ENCODE measurements at regions of chr12 and their contacts with region 1.

Region 1: GRCh38 chr12:48542300-48542928 is 17.0 kb downstream of the OR8S1 start:
- DNase-seq: peak; percentile 63
- ATAC-seq: peak; percentile 86
- H3K4me3 ChIP-seq: no peak overlapping the region
- H3K27ac ChIP-seq: no peak overlapping the region
- H3K4me1 ChIP-seq: peaks cover 6% of the 10 kb centered on the region
- H3K27me3 ChIP-seq: peaks cover 22% of the 10 kb centered on the region
- CTCF ChIP-seq: peak; percentile 90

Region 2: DNA sequence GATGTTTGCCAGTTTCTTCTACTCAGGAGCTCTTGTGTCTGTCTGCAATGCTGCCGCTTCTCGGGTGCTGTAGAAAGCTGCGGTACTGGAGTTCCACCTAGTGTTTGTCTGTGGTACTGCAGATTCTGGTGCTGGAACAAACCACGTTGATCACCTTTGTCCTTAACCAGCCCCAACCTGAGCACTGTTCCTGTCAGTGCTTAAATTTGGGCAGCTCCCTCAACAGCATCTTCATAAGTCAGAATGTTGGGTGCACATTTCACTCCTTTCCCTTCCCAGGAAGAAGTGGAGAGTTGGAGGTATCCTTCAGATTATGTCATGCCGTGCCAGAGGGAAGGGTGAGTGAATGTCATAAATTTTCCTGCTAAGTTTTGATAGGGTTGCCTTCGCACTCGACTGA is 76.1 kb after region 1 on chr12:
- CTCF ChIA-PET with region 1: interaction called, 60 read pairs
- POLR2A ChIA-PET with region 1: interaction called, 4 read pairs
- intact Hi-C with region 1: loop called (anchors 1 kb)
- DNase-seq: peak; percentile 89
- ATAC-seq: peak; percentile 98
- H3K4me3 ChIP-seq: no peak overlapping the region
- H3K27ac ChIP-seq: no peak overlapping the region
- H3K4me1 ChIP-seq: no peaks in the 10 kb centered on the region
- H3K27me3 ChIP-seq: no peaks in the 10 kb centered on the region
- CTCF ChIP-seq: peak; percentile 97

Region 3: DNA sequence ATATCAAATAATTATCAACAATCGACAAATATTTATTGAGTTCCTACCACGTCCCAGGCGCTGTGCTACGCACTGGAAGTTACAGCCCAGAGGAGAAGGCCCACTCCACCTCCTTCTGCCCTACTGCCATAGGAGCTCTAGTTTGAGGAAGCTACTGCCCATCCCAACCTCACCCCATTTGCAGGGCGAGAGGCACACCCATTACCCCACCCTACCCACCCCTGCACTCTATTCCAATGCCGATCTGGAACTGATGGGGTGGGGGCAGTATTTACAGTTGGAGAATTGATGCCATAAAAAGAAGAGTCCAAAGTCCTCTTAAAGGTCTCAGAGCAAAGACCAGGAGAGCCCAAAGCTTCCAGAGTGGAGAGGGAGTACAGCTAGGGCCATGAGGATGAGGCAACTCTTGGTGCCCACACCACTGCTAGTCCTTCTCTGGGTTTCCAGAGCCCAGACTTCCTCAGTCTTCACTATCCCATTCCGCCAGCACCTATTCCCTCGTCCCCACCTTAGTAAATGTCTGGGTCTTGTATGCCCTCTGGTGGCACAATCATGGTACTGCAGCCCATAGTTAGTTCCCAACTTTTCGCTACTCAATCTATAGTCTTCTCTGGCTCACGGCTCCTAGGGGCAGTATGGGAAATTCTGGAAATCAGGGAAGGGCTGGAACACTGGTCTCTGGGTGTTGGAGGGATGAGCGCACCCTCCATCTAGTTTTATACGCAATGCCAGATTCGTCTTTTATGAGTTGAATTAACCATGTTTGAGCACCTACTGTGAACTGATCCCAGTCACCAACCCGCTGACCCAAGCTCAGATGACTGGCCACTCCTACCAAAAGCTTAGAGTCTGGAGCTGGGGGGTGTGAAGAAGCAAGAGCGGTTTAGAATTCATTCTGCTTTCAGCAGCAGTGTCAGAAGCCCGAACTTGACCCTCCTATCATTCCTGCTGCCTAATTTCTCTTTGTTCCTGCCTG is 253.4 kb after region 1 on chr12:
- CTCF ChIA-PET with region 1: no interaction called
- POLR2A ChIA-PET with region 1: no interaction called
- intact Hi-C with region 1: loop called (anchors 5 kb)
- DNase-seq: peak; percentile 93
- ATAC-seq: peak; percentile 92
- H3K4me3 ChIP-seq: no peak overlapping the region
- H3K27ac ChIP-seq: no peak overlapping the region
- H3K4me1 ChIP-seq: peaks cover 10% of the 10 kb centered on the region
- H3K27me3 ChIP-seq: no peaks in the 10 kb centered on the region
- CTCF ChIP-seq: peak; percentile 98

Region 4: GRCh38 chr12:49440035-49440434 is 897.6 kb after region 1 on chr12:
- CTCF ChIA-PET with region 1: no interaction called
- POLR2A ChIA-PET with region 1: no interaction called
- intact Hi-C with region 1: no loop called
- DNase-seq: no peak
- ATAC-seq: no peak
- H3K4me3 ChIP-seq: no peak overlapping the region
- H3K27ac ChIP-seq: no peak overlapping the region
- H3K4me1 ChIP-seq: no peaks in the 10 kb centered on the region
- H3K27me3 ChIP-seq: no peaks in the 10 kb centered on the region
- CTCF ChIP-seq: no peak